Posterior vena cava (tissue), 2 donors: ENCODE measurements at regions of chr2 and their contacts with region 1.

Region 1: GRCh38 chr2:71282495-71282894 is 49.1 kb upstream of the ZNF638 start:
- DNase-seq: no peak

Region 2: GRCh38 chr2:70354264-70354949 is 928.1 kb before region 1 on chr2:
- intact Hi-C with region 1: loop called in 1 of 2 experiments (anchors 5 kb)
- DNase-seq: no peak

Region 3: GRCh38 chr2:71716781-71717624 is 434.5 kb after region 1 on chr2:
- intact Hi-C with region 1: no loop called
- DNase-seq: peak; percentile 94